BJ (cell line): ENCODE measurements at regions of chr2 and their contacts with region 1.

Region 1: GRCh38 chr2:45611020-45611737 is at the start of gene SRBD1:
- DNase-seq: peak; percentile 70
- H3K4me3 ChIP-seq: peak within 1 kb of the TSS; percentile 55
- H3K27me3 ChIP-seq: no peaks in the 10 kb centered on the region
- CTCF ChIP-seq: no peak; the same call in 1 of the 2 replicates
- polyA plus RNA-seq, gene SRBD1: 2.7 and 6.6 TPM in 2 replicates

Region 2: DNA sequence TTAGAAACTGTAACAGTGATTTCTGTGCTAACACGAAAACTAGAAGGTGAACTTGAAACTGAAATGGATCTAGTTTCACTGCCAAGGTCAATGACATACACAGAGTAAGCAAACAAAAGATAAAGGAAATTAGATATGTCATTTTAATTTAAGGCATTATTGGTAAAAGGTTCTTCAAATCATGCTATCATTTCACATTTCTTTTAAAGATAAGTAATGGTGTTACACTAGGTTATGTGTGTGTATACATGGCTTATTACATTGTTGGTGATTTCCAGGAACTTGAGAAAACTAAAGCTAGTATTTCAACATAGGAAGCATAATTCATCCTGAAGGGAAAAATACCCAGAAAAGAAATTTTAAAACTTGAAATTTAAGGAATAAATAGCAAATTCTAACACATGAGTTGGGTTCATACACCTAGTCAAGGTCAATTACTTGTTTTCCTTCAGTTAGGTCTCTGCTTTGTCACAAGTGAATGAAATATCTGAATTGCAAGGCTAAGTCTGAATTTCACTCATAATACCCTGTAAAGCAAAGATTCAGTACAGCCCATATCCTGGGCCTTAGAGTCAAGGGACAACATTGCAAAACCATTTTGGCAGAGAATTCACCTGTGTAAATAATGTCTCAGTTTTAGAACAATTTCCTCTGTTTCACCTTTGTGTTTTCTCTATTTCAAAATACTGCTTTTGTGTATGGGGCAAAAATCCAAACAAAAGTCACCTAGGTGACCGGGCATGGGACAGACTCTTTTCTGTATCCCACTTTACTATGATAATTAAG is 141.7 kb before region 1 on chr2:
- CTCF ChIA-PET with region 1: no interaction called
- POLR2A ChIA-PET with region 1: no interaction called
- DNase-seq: no peak
- H3K4me3 ChIP-seq: no peak overlapping the region
- H3K27me3 ChIP-seq: no peaks in the 10 kb centered on the region
- CTCF ChIP-seq: no peak

Region 3: DNA sequence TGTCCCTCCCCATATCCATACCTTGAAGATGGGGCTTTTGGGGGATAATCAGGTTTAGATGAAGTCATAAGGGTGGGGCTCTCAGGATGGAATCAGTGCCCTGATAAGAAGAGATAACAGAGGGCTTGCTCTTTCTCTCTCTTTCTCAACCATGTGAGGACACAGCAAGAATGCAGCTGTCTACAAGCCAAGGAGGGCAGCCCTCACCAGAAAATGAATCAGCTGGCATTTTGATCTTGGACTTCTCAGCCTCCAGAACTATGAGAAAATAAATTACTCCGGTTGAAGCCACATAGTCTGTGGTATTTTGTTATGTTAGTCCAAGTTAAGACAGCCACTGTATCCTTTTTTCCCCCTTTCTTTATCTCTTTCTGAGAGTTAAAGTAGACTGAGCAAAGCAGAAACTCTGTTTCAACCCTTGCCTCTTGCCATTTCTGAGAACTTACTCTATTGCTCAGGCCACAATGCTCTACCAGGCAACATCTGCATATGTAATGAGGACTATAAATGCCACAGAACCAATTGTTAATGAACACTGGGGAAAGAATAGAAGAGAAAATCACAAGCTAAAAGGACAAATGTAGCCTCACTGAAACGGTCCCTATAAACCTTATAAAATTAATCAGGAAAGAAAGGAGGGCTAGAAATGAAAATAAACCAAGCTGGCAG is 57.0 kb before region 1 on chr2:
- CTCF ChIA-PET with region 1: no interaction called
- POLR2A ChIA-PET with region 1: no interaction called
- DNase-seq: no peak
- H3K4me3 ChIP-seq: no peak overlapping the region
- H3K27me3 ChIP-seq: no peaks in the 10 kb centered on the region
- CTCF ChIP-seq: no peak

Region 4: GRCh38 chr2:45585267-45585861 is 25.8 kb before region 1 on chr2:
- CTCF ChIA-PET with region 1: interaction called, 11 read pairs
- POLR2A ChIA-PET with region 1: no interaction called
- DNase-seq: no peak
- H3K4me3 ChIP-seq: no peak overlapping the region
- H3K27me3 ChIP-seq: no peaks in the 10 kb centered on the region
- CTCF ChIP-seq: peak; percentile 80

Region 5: GRCh38 chr2:46257476-46257875 is 646.3 kb after region 1 on chr2:
- CTCF ChIA-PET with region 1: no interaction called
- POLR2A ChIA-PET with region 1: no interaction called
- DNase-seq: peak; percentile 41
- H3K4me3 ChIP-seq: no peak overlapping the region
- H3K27me3 ChIP-seq: peaks cover 2% of the 10 kb centered on the region
- CTCF ChIP-seq: no peak